ENCODE measurements at regions of chr14 and their contacts with region 1.

Region 1: GRCh38 chr14:69818757-69819191 is 21.7 kb upstream of the SLC10A1 start:
- DNase-seq: peak; percentile 63
- ATAC-seq: peak; percentile 81
- H3K4me3 Mint-ChIP-seq: no peak overlapping the region
- H3K27ac Mint-ChIP-seq: no peak overlapping the region
- H3K4me1 Mint-ChIP-seq: peaks cover 4% of the 10 kb centered on the region
- H3K27me3 Mint-ChIP-seq: peaks cover 8% of the 10 kb centered on the region

Region 2: DNA sequence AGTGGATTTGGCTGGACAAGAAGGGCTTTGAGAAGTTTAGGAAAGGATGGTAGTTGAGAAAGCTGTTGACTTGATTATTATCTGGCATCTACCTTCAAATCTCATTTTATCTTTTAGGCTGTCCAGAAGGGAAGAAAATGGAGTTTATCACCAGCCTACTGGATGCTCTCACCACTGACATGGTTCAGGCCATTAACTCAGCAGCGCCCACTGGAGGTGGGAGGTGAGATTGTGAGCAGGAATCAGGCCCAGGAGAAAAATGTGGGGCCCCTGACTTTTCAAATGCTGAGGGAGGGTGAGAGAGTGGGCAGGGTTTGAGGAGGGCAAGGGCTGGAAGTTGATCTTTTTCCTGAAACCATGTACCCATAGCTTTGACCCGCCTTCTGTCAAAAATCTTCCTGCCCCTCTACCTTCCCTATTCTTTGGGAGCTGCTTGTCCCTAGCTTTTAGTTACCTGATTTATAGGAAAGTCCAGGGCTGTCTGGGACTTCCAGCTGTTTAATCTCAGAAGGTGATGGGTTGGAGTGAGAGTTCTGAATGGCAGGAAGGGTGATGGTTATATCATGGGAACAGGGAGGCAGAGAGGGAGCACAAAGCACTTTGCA is 194.6 kb after region 1 on chr14:
- CTCF ChIA-PET with region 1: interaction called, 10 read pairs
- DNase-seq: peak; percentile 57
- ATAC-seq: no peak
- H3K4me3 Mint-ChIP-seq: no peak overlapping the region
- H3K27ac Mint-ChIP-seq: no peak overlapping the region
- H3K4me1 Mint-ChIP-seq: peaks cover 5% of the 10 kb centered on the region
- H3K27me3 Mint-ChIP-seq: peaks cover 23% of the 10 kb centered on the region

Region 3: DNA sequence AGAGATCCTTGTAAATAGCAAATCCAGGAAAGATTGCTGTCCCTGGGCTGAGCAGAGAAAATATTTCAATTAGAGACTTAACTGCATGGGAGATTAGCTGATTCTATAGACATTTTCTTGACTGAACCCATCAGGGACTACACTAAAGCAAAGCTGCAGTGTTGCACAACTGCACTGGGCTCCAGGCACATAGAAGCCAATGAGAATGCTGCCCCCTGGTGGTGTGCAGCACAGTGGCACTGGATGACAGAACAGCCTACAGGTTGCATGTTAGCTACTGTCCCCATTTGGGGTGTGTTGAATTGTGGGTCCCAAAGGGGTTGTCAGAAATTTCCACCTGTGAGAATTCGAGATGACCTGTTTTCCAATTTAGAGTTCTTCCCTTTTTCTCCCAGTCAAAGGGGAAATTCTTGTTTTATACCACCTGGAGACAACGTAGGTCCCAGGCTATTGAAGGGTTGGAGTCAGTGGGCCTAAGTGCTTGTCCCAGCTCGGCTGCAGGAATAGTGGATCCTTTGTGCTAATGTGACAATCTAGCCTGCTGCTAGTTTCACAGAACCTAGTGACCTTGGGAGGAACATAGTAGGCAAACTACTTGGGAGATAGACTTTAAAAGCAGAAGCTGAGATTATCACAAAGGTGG is 255.3 kb after region 1 on chr14:
- CTCF ChIA-PET with region 1: interaction called, 11 read pairs
- DNase-seq: peak; percentile 70
- ATAC-seq: no peak
- H3K4me3 Mint-ChIP-seq: no peak overlapping the region
- H3K27ac Mint-ChIP-seq: no peak overlapping the region
- H3K4me1 Mint-ChIP-seq: no peaks in the 10 kb centered on the region
- H3K27me3 Mint-ChIP-seq: peaks cover 50% of the 10 kb centered on the region